ENCODE measurements at regions of chr4 and their contacts with region 1.

Region 1: DNA sequence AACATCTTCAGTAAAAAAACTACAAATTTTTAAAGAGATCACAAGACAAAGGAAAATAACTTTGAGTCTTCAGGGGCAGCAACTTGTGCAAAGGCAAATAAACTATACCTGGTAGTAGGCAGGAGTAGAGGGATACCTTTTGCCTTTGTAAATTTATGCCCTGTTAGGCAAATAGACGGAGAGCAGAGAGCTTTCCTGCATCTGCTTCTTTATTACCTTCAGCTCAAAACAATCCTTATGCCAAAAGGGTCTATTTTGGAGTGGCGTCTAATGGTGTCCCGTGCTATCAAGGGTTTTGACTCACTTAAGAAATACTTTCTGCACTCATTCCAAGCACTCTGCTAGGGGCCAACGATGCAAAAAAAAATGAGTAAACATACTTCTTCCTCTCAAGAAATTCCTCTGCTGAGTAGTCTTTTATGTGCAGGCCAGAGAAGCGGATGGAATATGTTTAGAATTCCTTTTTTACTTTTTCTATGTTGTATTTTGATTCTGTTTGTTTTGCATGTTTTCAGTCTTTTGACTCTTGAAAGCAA is 131.9 kb downstream of the ANXA5 start:
- DNase-seq: no peak
- ATAC-seq: no peak
- H3K4me3 ChIP-seq: no peak overlapping the region
- H3K27ac ChIP-seq: no peak overlapping the region
- H3K4me1 ChIP-seq: no peaks in the 10 kb centered on the region
- H3K27me3 ChIP-seq: no peaks in the 10 kb centered on the region
- CTCF ChIP-seq: no peak

Region 2: GRCh38 chr4:121428721-121429120 is 136.2 kb before region 1 on chr4:
- intact Hi-C with region 1: no loop called
- DNase-seq: no peak
- ATAC-seq: no peak
- H3K4me3 ChIP-seq: no peak overlapping the region
- H3K27ac ChIP-seq: no peak overlapping the region
- H3K4me1 ChIP-seq: no peaks in the 10 kb centered on the region
- H3K27me3 ChIP-seq: no peaks in the 10 kb centered on the region
- CTCF ChIP-seq: no peak

Region 3: DNA sequence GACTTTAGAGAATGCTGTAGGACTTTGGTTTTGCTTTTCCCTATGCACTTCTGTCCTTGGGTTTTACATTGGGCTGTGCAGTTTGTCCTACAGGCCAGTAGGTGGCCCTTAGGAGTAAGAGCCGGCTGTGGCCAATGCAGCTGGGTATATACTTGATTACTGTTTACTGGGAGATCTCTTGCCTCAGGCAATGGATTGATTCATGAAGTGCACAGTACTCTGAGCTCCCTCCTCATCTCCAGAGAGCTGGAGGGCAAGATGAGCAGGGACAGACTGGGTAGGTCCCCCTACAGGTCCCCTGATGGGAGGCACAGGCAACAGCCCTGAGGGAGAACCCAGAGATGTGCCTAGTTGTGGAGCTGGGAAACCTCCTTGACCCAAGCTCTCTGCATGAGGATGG is 80.3 kb before region 1 on chr4:
- intact Hi-C with region 1: no loop called
- DNase-seq: no peak
- ATAC-seq: peak in 7 of 8 donors; percentile 53 to 87 (median 73)
- H3K4me3 ChIP-seq: no peak overlapping the region
- H3K27ac ChIP-seq: no peak overlapping the region
- H3K4me1 ChIP-seq: no peaks in the 10 kb centered on the region
- H3K27me3 ChIP-seq: no peaks in the 10 kb centered on the region
- CTCF ChIP-seq: peak; percentile 35 to 76 (median 63)

Region 4: GRCh38 chr4:121648516-121648915 is 83.6 kb after region 1 on chr4:
- intact Hi-C with region 1: loop called in 1 of 10 experiments (anchors 10 kb)
- DNase-seq: no peak
- ATAC-seq: peak in 5 of 8 donors; percentile 46 to 81 (median 59)
- H3K4me3 ChIP-seq: no peak overlapping the region
- H3K27ac ChIP-seq: no peak overlapping the region
- H3K4me1 ChIP-seq: no peaks in the 10 kb centered on the region
- H3K27me3 ChIP-seq: no peaks in the 10 kb centered on the region
- CTCF ChIP-seq: no peak

Measured in heart right ventricle (tissue), 16 donors.